Dendritic cell treated with granulocyte-macrophage colony-stimulating factor and Interleukin-4, amounts not matched to agents 40 ng/mL and 50 ng/mL, for 4 days (primary cell): ENCODE measurements at regions of chr21 and their contacts with region 1.

Region 1: DNA sequence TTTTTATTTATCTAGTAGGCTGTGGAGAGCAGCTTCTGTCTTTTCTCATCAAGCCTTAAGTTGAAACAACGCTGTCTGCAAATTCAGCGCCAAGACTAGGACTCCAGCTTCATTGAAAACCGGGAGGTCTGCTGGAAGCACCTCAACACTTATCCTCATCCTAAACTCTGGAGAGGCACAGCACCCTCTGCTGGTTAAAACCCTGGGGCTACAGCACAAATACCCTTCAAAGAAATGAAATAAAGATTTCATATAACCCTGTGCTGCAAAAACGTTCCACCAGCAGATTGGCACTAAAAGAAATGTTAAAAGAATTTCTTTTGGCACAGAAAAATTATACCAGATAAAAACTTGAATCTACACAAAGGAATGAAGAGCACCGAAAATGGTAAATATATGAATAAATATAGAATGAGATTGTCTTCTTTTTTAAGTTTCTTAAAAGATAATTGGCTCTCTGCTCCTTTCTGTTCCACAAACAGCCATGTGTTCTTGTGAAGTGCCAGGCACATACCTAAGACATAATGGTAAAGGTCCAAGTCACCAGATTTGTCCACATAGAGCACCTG is 227.7 kb upstream of the SAMSN1 start:
- H3K4me3 Mint-ChIP-seq: no peak overlapping the region
- H3K27ac Mint-ChIP-seq: no peak overlapping the region
- H3K4me1 Mint-ChIP-seq: peaks cover 9% of the 10 kb centered on the region
- H3K27me3 Mint-ChIP-seq: no peaks in the 10 kb centered on the region

Region 2: GRCh38 chr21:14259747-14260146 is 514.1 kb before region 1 on chr21:
- intact Hi-C with region 1: loop called (anchors 1 kb)
- H3K4me3 Mint-ChIP-seq: no peak overlapping the region
- H3K27ac Mint-ChIP-seq: no peak overlapping the region
- H3K4me1 Mint-ChIP-seq: no peaks in the 10 kb centered on the region
- H3K27me3 Mint-ChIP-seq: no peaks in the 10 kb centered on the region

Region 3: GRCh38 chr21:14403681-14404318 is 370.1 kb before region 1 on chr21:
- intact Hi-C with region 1: loop called (anchors 2 kb)
- H3K4me3 Mint-ChIP-seq: no peak overlapping the region
- H3K27ac Mint-ChIP-seq: no peak overlapping the region
- H3K4me1 Mint-ChIP-seq: no peaks in the 10 kb centered on the region
- H3K27me3 Mint-ChIP-seq: no peaks in the 10 kb centered on the region

Region 4: DNA sequence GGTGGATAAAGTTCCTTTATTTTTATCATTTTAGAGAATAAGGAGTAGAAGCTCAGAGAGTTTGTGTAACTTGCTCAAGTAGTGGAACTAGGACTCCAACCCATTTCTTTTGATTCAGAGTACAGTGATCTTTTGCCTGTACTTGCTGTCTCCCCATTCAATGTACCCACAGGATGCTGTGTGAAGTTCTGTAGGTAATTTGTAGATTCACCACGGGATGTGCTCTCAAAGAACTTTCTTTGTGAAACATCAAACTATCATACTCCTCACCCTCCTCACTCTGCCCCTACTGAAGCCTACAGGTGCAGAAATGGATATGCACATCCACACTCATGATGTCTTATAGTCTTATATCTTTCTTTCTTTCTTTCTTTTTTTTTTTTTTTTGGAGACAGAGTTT is 325.1 kb before region 1 on chr21:
- intact Hi-C with region 1: loop called (anchors 10 kb)
- H3K4me3 Mint-ChIP-seq: no peak overlapping the region
- H3K27ac Mint-ChIP-seq: no peak overlapping the region
- H3K4me1 Mint-ChIP-seq: peaks cover 5% of the 10 kb centered on the region
- H3K27me3 Mint-ChIP-seq: no peaks in the 10 kb centered on the region

Region 5: DNA sequence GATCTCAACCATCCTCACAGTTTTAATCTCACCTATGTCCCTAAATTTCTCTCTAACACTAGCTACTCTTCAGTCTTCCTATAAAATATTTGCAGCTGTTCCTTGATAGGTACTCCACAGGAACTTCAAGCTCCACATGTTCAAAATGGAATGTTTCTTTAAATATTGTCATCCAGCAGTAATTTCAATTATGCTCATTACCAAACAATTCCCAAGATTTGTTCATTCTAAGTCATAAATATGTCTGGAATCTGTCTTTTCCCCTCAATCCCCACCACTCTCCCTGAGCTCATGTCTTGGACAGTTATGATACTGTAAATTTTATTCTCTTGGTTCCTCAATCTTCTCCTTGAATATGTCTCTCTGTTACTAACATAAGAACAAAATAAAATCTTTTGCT is 76.5 kb after region 1 on chr21:
- intact Hi-C with region 1: no loop called
- H3K4me3 Mint-ChIP-seq: no peak overlapping the region
- H3K27ac Mint-ChIP-seq: no peak overlapping the region
- H3K4me1 Mint-ChIP-seq: peaks cover 10% of the 10 kb centered on the region
- H3K27me3 Mint-ChIP-seq: no peaks in the 10 kb centered on the region